Panc1 (cell line): ENCODE measurements at regions of chr6 and their contacts with region 1.

Region 1: GRCh38 chr6:10478187-10479040 is 42.7 kb upstream of the GCNT2 start:
- DNase-seq: peak; percentile 52
- ATAC-seq: peak; percentile 80
- H3K4me3 ChIP-seq: no peak overlapping the region
- H3K27ac ChIP-seq: no peak overlapping the region
- H3K4me1 ChIP-seq: no peaks in the 10 kb centered on the region
- H3K27me3 ChIP-seq: no peaks in the 10 kb centered on the region
- CTCF ChIP-seq: peak; percentile 81

Region 2: GRCh38 chr6:10800829-10801535 is 322.6 kb after region 1 on chr6:
- CTCF ChIA-PET with region 1: interaction called, 6 read pairs
- POLR2A ChIA-PET with region 1: no interaction called
- in situ Hi-C with region 1: no loop called
- intact Hi-C with region 1: loop called (anchors 5 kb)
- DNase-seq: peak; percentile 61
- ATAC-seq: peak; percentile 99
- H3K4me3 ChIP-seq: no peak overlapping the region
- H3K27ac ChIP-seq: no peak overlapping the region
- H3K4me1 ChIP-seq: no peaks in the 10 kb centered on the region
- H3K27me3 ChIP-seq: no peaks in the 10 kb centered on the region
- CTCF ChIP-seq: peak; percentile 99

Region 3: GRCh38 chr6:10824297-10824696 is 345.9 kb after region 1 on chr6:
- CTCF ChIA-PET with region 1: no interaction called
- POLR2A ChIA-PET with region 1: interaction called, 14 read pairs
- in situ Hi-C with region 1: no loop called
- intact Hi-C with region 1: no loop called
- DNase-seq: no peak
- ATAC-seq: no peak
- H3K4me3 ChIP-seq: no peak overlapping the region
- H3K27ac ChIP-seq: no peak overlapping the region
- H3K4me1 ChIP-seq: 0 out of 2 replicates have a peak, but pooled peaks cover 3% of the 10 kb centered on the region
- H3K27me3 ChIP-seq: no peaks in the 10 kb centered on the region
- CTCF ChIP-seq: no peak